ENCODE measurements at regions of chr6 and their contacts with region 1.

Region 1: GRCh38 chr6:27772261-27773001 is 139.8 kb downstream of the OR2B2 start:
- DNase-seq: peak; percentile 84 to 91
- ATAC-seq: peak; percentile 93 to 99 (median 99)
- H3K4me3 ChIP-seq: no peak overlapping the region
- H3K4me3 Mint-ChIP-seq: no peak overlapping the region
- H3K27ac ChIP-seq: no peak overlapping the region
- H3K27ac Mint-ChIP-seq: no peak overlapping the region
- H3K4me1 ChIP-seq: peaks cover 12% of the 10 kb centered on the region
- H3K4me1 Mint-ChIP-seq: peaks cover 6 to 8% of the 10 kb centered on the region in 2 donors
- H3K27me3 ChIP-seq: no peaks in the 10 kb centered on the region
- H3K27me3 Mint-ChIP-seq: peaks cover 15 to 21% of the 10 kb centered on the region in 2 donors
- CTCF ChIP-seq: peak; percentile 93

Region 2: GRCh38 chr6:27672113-27672799 is 100.2 kb before region 1 on chr6:
- intact Hi-C with region 1: no loop called
- DNase-seq: peak; percentile 28 to 61
- ATAC-seq: peak; percentile 64 to 85 (median 76)
- H3K4me3 ChIP-seq: no peak overlapping the region
- H3K4me3 Mint-ChIP-seq: peak overlapping the region; percentile 78
- H3K27ac ChIP-seq: no peak overlapping the region
- H3K27ac Mint-ChIP-seq: peak overlapping the region; percentile 35 to 64
- H3K4me1 ChIP-seq: peaks cover 17% of the 10 kb centered on the region
- H3K4me1 Mint-ChIP-seq: peaks cover 31 to 33% of the 10 kb centered on the region in 2 donors
- H3K27me3 ChIP-seq: peaks cover 80% of the 10 kb centered on the region
- H3K27me3 Mint-ChIP-seq: peaks cover 67 to 89% of the 10 kb centered on the region in 2 donors
- CTCF ChIP-seq: no peak

Region 3: DNA sequence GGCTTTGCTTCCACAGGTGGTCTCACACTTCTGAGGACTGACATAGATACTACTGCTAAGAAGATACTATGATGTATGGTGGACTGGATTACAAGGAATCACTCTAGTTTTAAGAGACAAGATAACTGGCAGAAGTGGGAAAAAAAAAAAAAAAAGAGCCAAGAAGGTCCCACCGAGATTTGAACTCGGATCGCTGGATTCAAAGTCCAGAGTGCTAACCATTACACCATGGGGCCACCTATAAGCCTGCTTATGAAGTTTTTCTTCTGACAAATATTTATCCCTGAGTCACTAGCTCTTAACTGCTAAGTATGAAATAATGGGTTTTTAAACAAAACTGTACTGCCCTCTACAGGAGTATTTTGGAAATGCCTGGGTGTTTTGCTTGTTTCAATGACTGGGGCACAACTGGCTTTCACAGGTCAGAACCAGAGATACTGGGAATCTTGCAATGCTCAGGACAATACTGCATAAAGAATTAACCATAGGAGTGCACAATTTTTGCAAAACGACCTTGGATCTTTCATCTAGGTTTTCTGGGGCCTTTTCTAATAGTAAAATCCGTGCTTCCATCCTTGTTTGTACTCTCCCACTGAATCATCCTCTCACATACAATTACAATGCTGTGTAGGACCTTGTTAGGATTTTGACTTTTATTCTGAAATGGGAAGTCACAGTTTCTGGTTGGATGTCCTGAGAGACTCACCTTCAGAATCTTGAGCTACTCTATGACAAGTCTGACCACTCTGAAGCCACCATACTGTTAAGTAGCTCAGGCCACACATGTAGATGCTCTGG is 23.5 kb after region 1 on chr6:
- intact Hi-C with region 1: loop called (anchors 1 kb)
- DNase-seq: peak in 1 of 2 donors; percentile 89
- ATAC-seq: peak; percentile 83 to 92 (median 84)
- H3K4me3 ChIP-seq: no peak overlapping the region
- H3K4me3 Mint-ChIP-seq: peak overlapping the region; percentile 71
- H3K27ac ChIP-seq: no peak overlapping the region
- H3K27ac Mint-ChIP-seq: peak overlapping the region; percentile 53 to 86
- H3K4me1 ChIP-seq: peaks cover 22% of the 10 kb centered on the region
- H3K4me1 Mint-ChIP-seq: peaks cover 21 to 28% of the 10 kb centered on the region in 2 donors
- H3K27me3 ChIP-seq: no peaks in the 10 kb centered on the region
- H3K27me3 Mint-ChIP-seq: peaks cover 10 to 12% of the 10 kb centered on the region in 2 donors
- CTCF ChIP-seq: peak; percentile 73

Region 4: DNA sequence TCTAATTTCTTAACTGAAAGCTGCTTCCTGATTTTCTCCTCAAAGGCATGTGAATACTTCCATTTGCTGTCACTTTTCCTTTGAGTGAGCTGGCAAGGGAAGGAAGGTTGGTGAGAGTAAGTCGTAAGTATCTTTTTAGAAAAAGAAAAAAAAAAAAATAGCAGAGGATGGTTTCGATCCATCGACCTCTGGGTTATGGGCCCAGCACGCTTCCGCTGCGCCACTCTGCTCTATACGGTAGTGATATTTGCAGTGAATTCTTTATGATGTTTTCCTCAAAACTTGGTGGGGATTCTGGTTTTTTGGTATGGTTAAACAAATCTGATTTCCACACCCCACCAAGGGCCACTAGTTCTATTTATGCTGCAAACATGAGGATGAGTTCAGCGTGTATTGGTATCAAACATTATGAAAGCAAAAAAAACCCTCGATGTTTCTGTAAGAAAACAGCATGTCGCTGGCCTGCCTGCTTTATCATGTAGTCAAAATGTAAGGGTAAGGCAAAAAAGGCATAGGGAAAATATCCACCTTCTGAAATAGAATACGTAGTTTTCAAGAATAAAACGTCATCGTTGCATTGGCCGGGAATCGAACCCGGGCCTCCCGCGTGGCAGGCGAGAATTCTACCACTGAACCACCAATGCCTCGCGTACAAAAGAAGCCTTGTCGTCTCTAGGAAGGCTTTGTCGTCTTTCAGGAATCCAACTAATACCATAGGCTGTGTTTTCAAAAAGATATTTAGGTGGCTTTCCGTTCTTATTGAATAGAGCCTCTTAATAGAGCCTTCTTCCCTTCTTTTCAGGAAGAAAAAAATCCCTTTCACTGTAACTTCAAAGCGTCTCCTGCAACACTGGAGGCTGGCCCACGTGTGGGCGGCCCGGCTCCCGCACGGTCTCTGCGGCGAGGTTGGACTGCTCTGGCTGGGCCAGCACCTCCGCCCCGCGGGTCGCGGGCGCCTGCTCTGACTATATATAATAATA is 130.2 kb after region 1 on chr6:
- intact Hi-C with region 1: loop called (anchors 1 kb)
- DNase-seq: peak; percentile 91 to 96
- ATAC-seq: peak; percentile 87 to 90 (median 87)
- H3K4me3 ChIP-seq: peak overlapping the region; percentile 64
- H3K4me3 Mint-ChIP-seq: peak overlapping the region; percentile 91
- H3K27ac ChIP-seq: peak overlapping the region; percentile 90
- H3K27ac Mint-ChIP-seq: peak overlapping the region; percentile 95 to 99
- H3K4me1 ChIP-seq: peaks cover 7% of the 10 kb centered on the region
- H3K4me1 Mint-ChIP-seq: peaks cover 10 to 17% of the 10 kb centered on the region in 2 donors
- H3K27me3 ChIP-seq: peaks cover 4% of the 10 kb centered on the region
- H3K27me3 Mint-ChIP-seq: peaks cover 6 to 12% of the 10 kb centered on the region in 2 donors
- CTCF ChIP-seq: no peak

Measured in natural killer cell (primary cell).